PC-9 (cell line): ENCODE measurements at regions of chr5 and their contacts with region 1.

Region 1: GRCh38 chr5:14264604-14265316 is 121.6 kb downstream of the TRIO start:
- DNase-seq: peak; percentile 90 to 99
- H3K4me3 ChIP-seq: peak overlapping the region; percentile 52
- H3K27ac ChIP-seq: peak overlapping the region; percentile 88
- H3K4me1 ChIP-seq: peaks cover 62% of the 10 kb centered on the region
- H3K27me3 ChIP-seq: no peaks in the 10 kb centered on the region
- CTCF ChIP-seq: no peak

Region 2: GRCh38 chr5:14165375-14166091 is 99.2 kb before region 1 on chr5:
- CTCF ChIA-PET with region 1: interaction called, 8 read pairs
- POLR2A ChIA-PET with region 1: interaction called, 5 read pairs
- intact Hi-C with region 1: loop called (anchors 1 kb)
- DNase-seq: peak; percentile 79 to 80
- H3K4me3 ChIP-seq: no peak overlapping the region
- H3K27ac ChIP-seq: peak overlapping the region; percentile 63
- H3K4me1 ChIP-seq: peaks cover 50% of the 10 kb centered on the region
- H3K27me3 ChIP-seq: no peaks in the 10 kb centered on the region
- CTCF ChIP-seq: no peak

Region 3: GRCh38 chr5:14208071-14209021 is 56.4 kb before region 1 on chr5:
- CTCF ChIA-PET with region 1: interaction called, 4 read pairs
- POLR2A ChIA-PET with region 1: interaction called, 16 read pairs
- intact Hi-C with region 1: no loop called
- DNase-seq: peak in 1 of 2 experiments; percentile 34
- H3K4me3 ChIP-seq: no peak overlapping the region
- H3K27ac ChIP-seq: peak overlapping the region; percentile 21; the same call in 1 of the 2 replicates
- H3K4me1 ChIP-seq: peaks cover 23% of the 10 kb centered on the region
- H3K27me3 ChIP-seq: no peaks in the 10 kb centered on the region
- CTCF ChIP-seq: no peak

Region 4: GRCh38 chr5:14234219-14234618 is 30.5 kb before region 1 on chr5:
- CTCF ChIA-PET with region 1: interaction called, 8 read pairs
- POLR2A ChIA-PET with region 1: interaction called, 11 read pairs
- intact Hi-C with region 1: loop called (anchors 1 kb)
- DNase-seq: peak; percentile 93
- H3K4me3 ChIP-seq: no peak overlapping the region
- H3K27ac ChIP-seq: peak overlapping the region; percentile 73
- H3K4me1 ChIP-seq: peaks cover 40% of the 10 kb centered on the region
- H3K27me3 ChIP-seq: no peaks in the 10 kb centered on the region
- CTCF ChIP-seq: no peak